Dorsolateral prefrontal cortex (tissue), 120 donors: ENCODE measurements at regions of chr12 and their contacts with region 1.

Region 1: GRCh38 chr12:62603061-62603810 is 136.6 kb downstream of the MON2 start:
- DNase-seq: peak; percentile 73 to 93 (median 88)
- H3K4me3 ChIP-seq: peak overlapping the region; percentile 59 to 94 (median 83)
- H3K27ac ChIP-seq: peak overlapping the region; percentile 97 to 100 (median 100)
- H3K27me3 ChIP-seq: no peaks in the 10 kb centered on the region
- CTCF ChIP-seq: peak in 54 of 56 donors; percentile 29 to 75 (median 61)

Region 2: DNA sequence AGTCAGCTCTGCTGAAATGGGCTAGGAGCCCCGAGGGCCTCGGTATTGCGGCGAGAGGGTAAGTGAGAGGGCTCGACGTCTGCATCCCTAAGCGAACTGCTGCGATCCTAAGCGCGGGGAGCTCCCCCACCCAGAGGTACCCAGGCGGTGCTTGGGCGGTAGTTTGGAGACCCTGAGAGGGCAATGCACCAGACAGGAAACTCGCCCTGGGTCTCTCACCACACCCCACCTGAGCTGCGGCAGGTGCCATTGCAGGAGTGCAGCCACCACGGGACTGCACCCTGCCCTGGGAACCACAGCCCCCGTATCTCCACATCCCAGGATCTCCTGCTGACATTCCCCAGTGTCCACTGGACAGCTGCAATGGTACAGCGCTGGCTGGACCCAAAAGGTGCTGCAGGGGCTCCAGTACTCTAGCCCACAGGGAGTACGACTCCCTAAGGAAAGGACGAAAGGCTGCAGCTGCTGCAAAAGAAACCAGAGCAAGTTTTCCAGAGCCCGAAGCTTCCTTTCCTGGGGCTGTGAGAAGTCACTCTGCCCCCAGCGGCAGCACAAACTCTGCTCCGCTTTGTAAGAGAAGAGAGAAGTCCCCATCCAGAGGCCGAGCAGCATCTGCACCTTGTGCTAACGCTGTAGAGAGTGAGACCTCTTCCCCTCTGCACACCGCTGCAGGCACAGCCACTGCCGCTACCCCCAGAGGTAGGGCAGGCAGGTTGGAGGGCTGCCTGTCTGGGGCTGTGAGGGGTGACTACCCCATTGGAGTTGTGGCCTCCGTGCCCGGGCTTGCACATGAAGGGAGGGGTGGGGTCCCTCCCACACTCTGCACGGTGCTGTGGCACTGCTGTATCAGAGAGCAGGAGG is 167.7 kb before region 1 on chr12:
- intact Hi-C with region 1: loop called in 1 of 2 experiments (anchors 5 kb)
- DNase-seq: peak; percentile 5 to 73 (median 60)
- H3K4me3 ChIP-seq: peak overlapping the region; percentile 36 to 82 (median 63)
- H3K27ac ChIP-seq: peak overlapping the region in 1 of 59 donors; percentile 19
- H3K27me3 ChIP-seq: peaks cover 0 to 20% (median 0%) of the 10 kb centered on the region in 45 donors
- CTCF ChIP-seq: peak in 55 of 56 donors; percentile 16 to 69 (median 53)

Region 3: GRCh38 chr12:62522984-62523383 is 80.3 kb before region 1 on chr12:
- intact Hi-C with region 1: loop called in 1 of 2 experiments (anchors 10 kb)
- DNase-seq: no peak
- H3K4me3 ChIP-seq: no peak overlapping the region
- H3K27ac ChIP-seq: peak overlapping the region in 35 of 59 donors; percentile 0 to 91 (median 37)
- H3K27me3 ChIP-seq: no peaks in the 10 kb centered on the region
- CTCF ChIP-seq: peak in 35 of 56 donors; percentile 7 to 59 (median 31)

Region 4: DNA sequence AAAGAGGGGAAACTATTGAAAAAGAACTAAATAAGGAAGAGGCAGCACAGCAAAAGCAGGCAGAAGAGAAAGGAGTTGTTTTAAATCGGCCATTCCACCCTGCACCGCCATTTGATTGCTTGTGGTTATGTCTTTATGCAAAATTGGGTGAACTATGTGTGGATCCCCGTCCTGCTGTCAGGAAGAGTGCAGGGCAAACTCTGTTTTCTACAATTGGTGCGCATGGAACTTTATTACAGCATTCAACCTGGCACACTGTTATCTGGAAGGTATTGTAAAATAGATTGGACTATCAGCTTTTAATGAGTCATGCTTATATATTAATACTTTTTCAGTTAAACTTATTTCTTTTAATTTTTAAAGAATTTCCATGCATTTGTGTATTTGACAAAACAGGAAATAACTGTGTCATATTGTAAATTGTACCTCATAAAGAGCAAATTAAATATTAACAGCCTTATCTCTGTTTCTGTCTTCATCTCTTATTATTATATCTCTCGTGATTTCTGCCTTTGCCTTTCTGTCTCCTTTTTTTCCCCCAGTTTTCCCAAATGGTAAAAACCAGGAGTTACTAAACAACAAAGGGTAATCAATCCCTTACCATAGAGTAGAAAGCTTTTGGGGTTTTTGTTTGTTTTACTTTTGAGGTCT is 50.2 kb before region 1 on chr12:
- intact Hi-C with region 1: no loop called
- DNase-seq: no peak
- H3K4me3 ChIP-seq: no peak overlapping the region
- H3K27ac ChIP-seq: no peak overlapping the region
- H3K27me3 ChIP-seq: no peaks in the 10 kb centered on the region
- CTCF ChIP-seq: no peak

Region 5: DNA sequence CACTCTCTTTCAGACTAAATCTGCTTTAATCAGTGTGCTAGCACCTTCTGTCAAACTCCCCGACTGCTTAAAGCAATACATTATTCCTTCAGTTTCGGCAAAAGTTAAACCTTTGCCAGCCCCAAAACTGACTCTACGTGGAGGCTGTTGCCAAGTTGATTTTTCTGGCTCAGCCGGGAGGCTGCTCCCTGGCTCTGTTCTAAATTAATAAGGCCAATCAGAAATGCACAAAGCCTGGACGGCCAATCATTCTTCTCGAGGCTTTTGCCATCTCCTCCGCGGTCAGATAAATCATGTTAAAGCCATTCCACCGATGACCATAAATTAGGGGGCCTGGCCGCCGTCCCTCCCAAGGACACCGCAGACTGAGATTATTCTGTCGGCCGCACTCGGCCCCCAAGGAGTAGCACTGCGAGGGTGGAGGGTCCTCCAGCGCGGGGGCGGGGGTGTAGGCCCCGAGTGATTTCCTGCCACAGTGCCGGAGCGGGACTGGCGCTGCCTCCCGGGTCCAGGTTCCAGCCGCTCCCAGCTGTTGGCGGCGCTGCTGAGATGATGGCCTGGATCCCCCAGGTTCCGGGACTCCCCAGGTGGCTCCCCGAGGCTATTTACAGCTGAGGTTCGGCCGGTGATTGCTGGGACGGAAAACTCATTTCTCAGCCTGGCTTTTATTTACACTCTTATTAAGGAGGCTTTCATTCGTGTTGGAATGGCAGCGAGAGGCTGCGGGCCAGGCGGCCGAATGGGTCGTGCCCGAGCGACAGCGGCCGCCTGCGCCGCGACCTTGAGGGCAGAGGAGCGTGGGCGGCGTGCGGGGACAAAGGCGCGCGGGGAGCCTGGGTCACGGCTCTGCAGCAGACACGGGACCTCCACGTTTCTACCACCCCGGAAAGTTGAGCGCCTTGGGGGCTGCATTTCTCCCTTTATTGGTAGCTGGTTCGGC is 28.5 kb after region 1 on chr12:
- intact Hi-C with region 1: loop called (anchors 2 kb)
- DNase-seq: peak; percentile 50 to 81 (median 64)
- H3K4me3 ChIP-seq: peak overlapping the region; percentile 52 to 83 (median 70)
- H3K27ac ChIP-seq: peak overlapping the region in 51 of 59 donors; percentile 25 to 84 (median 67)
- H3K27me3 ChIP-seq: no peaks in the 10 kb centered on the region
- CTCF ChIP-seq: peak in 53 of 56 donors; percentile 28 to 72 (median 49)

Region 6: GRCh38 chr12:62683776-62684569 is 80.7 kb after region 1 on chr12:
- intact Hi-C with region 1: no loop called
- DNase-seq: peak in 4 of 10 donors; percentile 23 to 53 (median 43)
- H3K4me3 ChIP-seq: no peak overlapping the region
- H3K27ac ChIP-seq: peak overlapping the region in 57 of 59 donors; percentile 0 to 81 (median 60)
- H3K27me3 ChIP-seq: no peaks in the 10 kb centered on the region
- CTCF ChIP-seq: no peak

Region 7: GRCh38 chr12:62724947-62725447 is 121.8 kb after region 1 on chr12:
- intact Hi-C with region 1: loop called in 1 of 2 experiments (anchors 5 kb)
- DNase-seq: peak in 1 of 10 donors; percentile 45
- H3K4me3 ChIP-seq: no peak overlapping the region
- H3K27ac ChIP-seq: peak overlapping the region in 18 of 59 donors; percentile 1 to 84 (median 24)
- H3K27me3 ChIP-seq: no peaks in the 10 kb centered on the region
- CTCF ChIP-seq: no peak

Region 8: DNA sequence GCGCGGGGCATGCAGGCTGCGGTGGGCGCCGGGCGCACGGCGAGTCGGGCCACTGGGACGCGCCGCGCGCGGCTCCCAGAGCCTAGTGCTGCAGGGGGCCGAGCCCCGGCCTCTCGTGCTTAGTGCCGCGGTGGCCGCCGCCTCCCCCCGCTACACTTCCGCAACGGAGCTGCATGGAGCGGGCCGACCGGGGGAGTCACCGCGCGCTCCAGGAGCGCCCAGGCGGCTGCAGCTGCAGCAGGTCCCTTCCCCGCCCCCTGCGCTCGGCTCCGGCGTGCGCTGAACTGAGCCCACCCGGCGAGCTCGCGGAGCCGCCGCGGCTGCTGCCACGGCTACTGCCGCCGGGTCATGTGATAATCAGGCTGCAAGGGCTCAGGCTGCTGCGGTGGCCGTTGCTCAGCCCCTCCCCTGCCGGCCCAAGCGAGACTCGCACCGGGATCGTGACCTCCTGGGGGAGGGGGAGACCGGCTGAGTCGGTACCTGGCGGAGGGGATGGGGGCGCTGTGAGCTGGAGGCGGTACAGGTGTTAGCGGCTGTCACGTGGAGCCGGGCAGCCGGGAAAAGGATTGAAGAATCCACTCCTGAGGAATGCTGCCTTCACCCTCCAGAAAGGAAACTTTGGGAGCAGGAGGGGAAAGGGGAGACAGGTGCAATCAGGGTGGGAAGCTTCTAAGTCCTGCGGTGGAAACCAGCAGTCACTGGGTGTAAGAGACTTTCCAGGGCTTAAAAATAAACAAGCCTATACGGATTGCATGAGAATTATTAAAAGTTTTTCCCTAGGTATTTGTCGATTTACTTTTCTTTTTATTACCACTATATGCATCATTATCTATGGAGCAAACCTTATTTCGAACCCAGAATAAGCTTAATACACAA is 331.8 kb after region 1 on chr12 and contains the start of gene PPM1H:
- intact Hi-C with region 1: loop called in 1 of 2 experiments (anchors 10 kb)
- DNase-seq: peak; percentile 70 to 88 (median 79)
- H3K4me3 ChIP-seq: peak within 1 kb of the TSS; percentile 69 to 97 (median 88)
- H3K27ac ChIP-seq: peak within 1 kb of the TSS; percentile 87 to 99 (median 95)
- H3K27me3 ChIP-seq: no peaks in the 10 kb centered on the region
- CTCF ChIP-seq: peak in 54 of 56 donors; percentile 25 to 79 (median 58)
- total RNA-seq, gene PPM1H: 33.6 to 75.1 (median 58.9) TPM